Heart left ventricle (tissue), 16 donors: ENCODE measurements at regions of chr11 and their contacts with region 1.

Region 1: GRCh38 chr11:78406538-78407196 is 11.0 kb downstream of the GAB2 start:
- DNase-seq: no peak
- ATAC-seq: no peak
- H3K4me3 ChIP-seq: no peak overlapping the region
- H3K27ac ChIP-seq: no peak overlapping the region
- H3K4me1 ChIP-seq: peaks cover 0 to 30% (median 4%) of the 10 kb centered on the region in 12 donors
- H3K27me3 ChIP-seq: no peaks in the 10 kb centered on the region
- CTCF ChIP-seq: no peak
- POLR2A ChIP-seq: no peak

Region 2: GRCh38 chr11:78370406-78371172 is 36.1 kb before region 1 on chr11:
- intact Hi-C with region 1: loop called in 1 of 10 experiments (anchors 5 kb)
- DNase-seq: peak in 4 of 5 donors; percentile 30 to 61 (median 36)
- ATAC-seq: peak; percentile 65 to 93 (median 86)
- H3K4me3 ChIP-seq: no peak overlapping the region
- H3K27ac ChIP-seq: peak overlapping the region in 10 of 12 donors; percentile 33 to 63 (median 52)
- H3K4me1 ChIP-seq: peaks cover 7 to 49% (median 30%) of the 10 kb centered on the region in 12 donors
- H3K27me3 ChIP-seq: no peaks in the 10 kb centered on the region
- CTCF ChIP-seq: no peak
- POLR2A ChIP-seq: no peak